Activated CD4-positive, alpha-beta memory T cell treated with anti-CD3 and anti-CD28 coated beads for 36 hours (primary cell): ENCODE measurements at regions of chr4 and their contacts with region 1.

Region 1: GRCh38 chr4:89316931-89317366 is 9.3 kb upstream of the GPRIN3 start:
- DNase-seq: peak; percentile 41
- H3K4me3 Mint-ChIP-seq: peak overlapping the region; percentile 33
- H3K27ac Mint-ChIP-seq: peak overlapping the region; percentile 84
- H3K4me1 Mint-ChIP-seq: peaks cover 47% of the 10 kb centered on the region
- H3K27me3 Mint-ChIP-seq: no peaks in the 10 kb centered on the region

Region 2: DNA sequence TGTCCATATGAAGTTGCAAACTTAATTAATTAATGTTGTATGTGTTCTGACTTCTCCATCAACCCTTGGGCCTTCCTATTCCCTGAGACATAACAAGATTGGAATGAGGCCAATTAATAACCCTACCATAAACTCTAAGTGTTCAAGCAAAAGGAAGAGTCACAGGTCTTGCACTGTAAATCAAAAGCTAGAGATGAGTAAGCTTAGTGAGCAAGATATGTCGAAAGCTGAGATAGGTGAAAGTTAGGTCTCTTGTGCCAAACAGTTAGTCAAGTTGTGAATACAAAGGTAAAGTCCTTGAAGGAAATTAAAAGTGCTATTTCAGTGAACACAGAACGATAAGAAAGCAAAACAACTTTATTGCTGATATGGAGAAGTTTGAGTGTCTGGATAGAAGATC is 48.8 kb after region 1 on chr4:
- CTCF ChIA-PET with region 1: no interaction called
- POLR2A ChIA-PET with region 1: no interaction called
- intact Hi-C with region 1: loop called (anchors 2 kb)
- DNase-seq: no peak
- H3K4me3 Mint-ChIP-seq: no peak overlapping the region
- H3K27ac Mint-ChIP-seq: peak overlapping the region; percentile 31
- H3K4me1 Mint-ChIP-seq: peaks cover 11% of the 10 kb centered on the region
- H3K27me3 Mint-ChIP-seq: no peaks in the 10 kb centered on the region

Region 3: DNA sequence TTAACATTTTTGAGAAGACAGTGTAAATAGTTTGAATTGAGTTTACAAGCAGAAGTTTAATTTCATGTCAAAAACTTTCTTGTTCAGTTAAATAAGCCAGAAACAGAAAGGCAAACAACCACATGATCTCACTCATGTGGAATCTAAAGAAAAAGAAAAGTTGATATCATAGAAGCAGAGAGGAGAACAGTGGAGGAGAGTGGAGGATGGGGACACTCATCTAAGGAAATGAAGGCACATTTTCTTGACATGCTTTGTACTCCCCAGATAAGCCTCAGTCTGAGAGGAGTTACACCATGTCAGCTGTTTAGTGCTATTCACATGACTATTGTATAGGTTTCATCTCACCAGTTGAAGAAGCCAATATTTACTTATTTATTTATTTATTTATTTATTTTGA is 506.5 kb after region 1 on chr4:
- CTCF ChIA-PET with region 1: no interaction called
- POLR2A ChIA-PET with region 1: no interaction called
- intact Hi-C with region 1: no loop called
- DNase-seq: no peak
- H3K4me3 Mint-ChIP-seq: no peak overlapping the region
- H3K27ac Mint-ChIP-seq: no peak overlapping the region
- H3K4me1 Mint-ChIP-seq: peaks cover 3% of the 10 kb centered on the region
- H3K27me3 Mint-ChIP-seq: peaks cover 1% of the 10 kb centered on the region